ENCODE measurements at regions of chr10 and their contacts with region 1.

Region 1: DNA sequence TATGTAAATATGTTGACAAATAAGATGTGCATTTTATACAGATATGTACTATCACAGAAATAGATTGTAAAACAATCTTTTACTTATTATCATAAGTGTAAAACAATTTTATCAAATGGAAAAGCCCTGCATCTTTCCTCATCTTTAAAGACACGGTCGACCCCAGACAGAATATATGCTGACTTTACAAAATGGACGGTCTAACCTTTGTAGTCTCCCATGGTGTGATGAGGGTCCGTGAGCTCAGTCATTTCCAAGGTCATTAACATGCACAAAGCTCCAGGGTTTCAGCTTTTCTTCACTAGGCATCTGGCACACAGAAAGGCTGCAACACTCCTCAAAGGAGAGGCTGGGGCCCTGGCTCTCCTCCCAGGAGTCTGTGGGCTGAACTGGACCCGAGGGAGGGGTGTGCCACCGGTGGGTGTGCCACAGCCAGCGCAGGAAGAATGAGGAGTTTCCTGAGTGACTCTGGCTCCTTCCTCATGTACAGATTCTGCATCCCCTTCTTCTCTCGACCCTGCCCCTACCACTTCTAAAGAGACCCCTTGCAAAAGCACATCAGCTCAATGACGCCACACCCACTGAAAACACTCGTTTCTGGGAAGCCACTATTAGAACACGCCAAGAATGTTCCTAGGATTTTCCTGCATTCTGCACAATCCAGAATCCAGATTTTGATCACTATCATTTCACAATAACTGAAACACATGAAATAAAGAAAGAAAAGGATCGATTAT is 26.2 kb upstream of the ABLIM1 start:
- DNase-seq: no peak

Region 2: GRCh38 chr10:114346271-114347031 is 337.8 kb before region 1 on chr10:
- CTCF ChIA-PET with region 1: no interaction called
- POLR2A ChIA-PET with region 1: no interaction called
- DNase-seq: no peak

Region 3: DNA sequence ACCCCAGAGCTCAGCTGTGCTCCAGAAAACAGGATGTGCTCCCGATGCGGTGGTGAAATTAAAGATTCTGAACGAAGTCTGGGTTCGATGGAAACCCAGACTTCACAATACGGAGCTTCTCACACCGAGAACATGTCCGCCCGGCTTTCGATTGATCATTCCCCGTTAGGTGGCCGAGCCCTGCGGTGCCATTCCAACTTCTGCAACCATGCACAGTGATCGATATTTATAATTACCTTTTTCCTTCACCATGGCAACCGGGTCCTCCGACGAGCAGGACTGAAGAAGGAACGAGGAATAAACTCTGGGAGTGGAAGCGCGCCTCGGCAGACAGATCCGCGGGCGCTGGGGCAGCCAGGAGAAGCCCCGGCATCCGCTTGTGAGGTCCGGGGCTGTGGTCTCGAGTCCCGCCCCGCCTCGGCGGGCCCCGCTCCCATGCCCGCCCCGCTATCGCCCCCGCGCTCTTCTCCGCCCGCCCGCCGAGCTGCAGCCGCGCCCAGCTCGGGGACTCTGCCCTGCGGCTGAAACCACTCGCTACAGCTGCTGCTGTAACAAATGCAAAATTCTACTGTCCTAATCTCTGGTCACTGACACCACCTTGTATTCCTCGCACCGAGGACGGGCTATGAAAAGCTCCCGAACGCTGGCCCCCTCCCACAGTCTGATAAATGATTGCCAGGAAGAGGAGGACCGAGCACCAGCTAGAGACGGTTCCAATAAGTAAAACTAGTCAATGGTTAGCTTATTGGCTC is 52.4 kb before region 1 on chr10:
- CTCF ChIA-PET with region 1: no interaction called
- POLR2A ChIA-PET with region 1: interaction called, 12 read pairs
- DNase-seq: peak; percentile 59

Measured in HEK293T (cell line).